Caco-2 (cell line): ENCODE measurements at regions of chr6 and their contacts with region 1.

Region 1: DNA sequence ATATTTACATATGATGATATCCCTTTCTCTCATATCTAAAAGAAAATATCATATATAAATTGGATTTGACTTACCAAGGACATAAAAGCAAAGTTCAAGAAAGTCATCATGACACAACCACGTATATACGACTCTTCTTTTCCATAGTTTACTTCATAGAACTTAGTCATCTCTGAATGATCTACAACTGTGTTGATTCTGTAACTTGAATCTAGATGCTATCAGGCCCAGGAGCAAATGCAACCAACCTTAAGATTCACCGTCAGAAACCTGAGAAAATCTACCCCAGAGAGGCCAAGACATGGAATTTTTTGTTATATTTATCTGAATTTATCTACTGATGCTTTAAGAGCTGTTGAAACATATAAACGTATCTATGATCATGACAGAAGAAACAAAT is 165.6 kb downstream of the PDE10A start:
- DNase-seq: no peak
- H3K4me3 ChIP-seq: no peak overlapping the region
- H3K4me3 Mint-ChIP-seq: no peak overlapping the region
- H3K27ac Mint-ChIP-seq: no peak overlapping the region
- H3K4me1 ChIP-seq: peaks cover 31% of the 10 kb centered on the region
- H3K4me1 Mint-ChIP-seq: peaks cover 23% of the 10 kb centered on the region
- H3K27me3 ChIP-seq: no peaks in the 10 kb centered on the region
- H3K27me3 Mint-ChIP-seq: no peaks in the 10 kb centered on the region
- CTCF ChIP-seq: no peak

Region 2: GRCh38 chr6:165486183-165487137 is 11.0 kb before region 1 on chr6:
- CTCF ChIA-PET with region 1: no interaction called
- POLR2A ChIA-PET with region 1: no interaction called
- intact Hi-C with region 1: loop called (anchors 2 kb)
- DNase-seq: no peak
- H3K4me3 ChIP-seq: no peak overlapping the region
- H3K4me3 Mint-ChIP-seq: no peak overlapping the region
- H3K27ac Mint-ChIP-seq: no peak overlapping the region
- H3K4me1 ChIP-seq: no peaks in the 10 kb centered on the region
- H3K4me1 Mint-ChIP-seq: no peaks in the 10 kb centered on the region
- H3K27me3 ChIP-seq: no peaks in the 10 kb centered on the region
- H3K27me3 Mint-ChIP-seq: no peaks in the 10 kb centered on the region
- CTCF ChIP-seq: no peak

Region 3: DNA sequence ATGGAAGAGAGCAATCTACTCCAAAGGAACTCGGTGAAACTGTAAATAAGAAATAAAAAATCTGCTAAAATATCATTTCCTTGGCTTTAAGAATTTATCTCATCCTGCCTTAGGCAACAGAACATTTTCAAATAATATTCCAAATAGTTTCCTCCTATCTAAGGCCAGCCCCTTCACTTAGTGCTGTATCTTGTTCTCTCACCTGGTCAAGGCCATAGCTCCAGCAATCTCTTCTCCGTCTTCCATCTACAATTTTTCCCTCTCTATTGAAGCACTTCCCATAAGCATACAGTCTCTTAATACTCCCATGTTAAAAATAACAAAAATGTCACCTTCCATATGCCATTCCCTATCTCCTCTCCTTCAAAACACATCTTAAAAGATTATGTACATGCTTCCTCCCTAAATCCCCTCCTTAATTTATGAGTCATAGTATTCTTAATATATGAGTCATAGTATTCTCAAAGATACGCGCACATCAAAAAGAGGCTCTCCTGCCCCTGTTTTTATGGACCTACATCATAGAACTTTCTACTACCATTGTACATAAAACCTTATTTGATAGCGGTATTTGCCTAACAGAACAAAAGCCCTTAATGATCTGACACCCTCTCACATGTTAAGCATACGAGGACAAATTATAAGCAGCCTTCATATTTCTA is 18.6 kb after region 1 on chr6:
- CTCF ChIA-PET with region 1: no interaction called
- POLR2A ChIA-PET with region 1: no interaction called
- intact Hi-C with region 1: loop called (anchors 2 kb)
- DNase-seq: no peak
- H3K4me3 ChIP-seq: no peak overlapping the region
- H3K4me3 Mint-ChIP-seq: no peak overlapping the region
- H3K27ac Mint-ChIP-seq: peak overlapping the region; percentile 20
- H3K4me1 ChIP-seq: peaks cover 9% of the 10 kb centered on the region; the same call in 1 of the 2 replicates
- H3K4me1 Mint-ChIP-seq: peaks cover 7% of the 10 kb centered on the region
- H3K27me3 ChIP-seq: no peaks in the 10 kb centered on the region
- H3K27me3 Mint-ChIP-seq: no peaks in the 10 kb centered on the region
- CTCF ChIP-seq: no peak

Region 4: GRCh38 chr6:165556116-165556843 is 58.8 kb after region 1 on chr6:
- CTCF ChIA-PET with region 1: no interaction called
- POLR2A ChIA-PET with region 1: no interaction called
- intact Hi-C with region 1: loop called (anchors 2 kb)
- DNase-seq: peak in 1 of 2 experiments; percentile 2
- H3K4me3 ChIP-seq: no peak overlapping the region
- H3K4me3 Mint-ChIP-seq: no peak overlapping the region
- H3K27ac Mint-ChIP-seq: no peak overlapping the region
- H3K4me1 ChIP-seq: peaks cover 5% of the 10 kb centered on the region; the same call in 1 of the 2 replicates
- H3K4me1 Mint-ChIP-seq: no peaks in the 10 kb centered on the region
- H3K27me3 ChIP-seq: no peaks in the 10 kb centered on the region
- H3K27me3 Mint-ChIP-seq: no peaks in the 10 kb centered on the region
- CTCF ChIP-seq: no peak

Region 5: DNA sequence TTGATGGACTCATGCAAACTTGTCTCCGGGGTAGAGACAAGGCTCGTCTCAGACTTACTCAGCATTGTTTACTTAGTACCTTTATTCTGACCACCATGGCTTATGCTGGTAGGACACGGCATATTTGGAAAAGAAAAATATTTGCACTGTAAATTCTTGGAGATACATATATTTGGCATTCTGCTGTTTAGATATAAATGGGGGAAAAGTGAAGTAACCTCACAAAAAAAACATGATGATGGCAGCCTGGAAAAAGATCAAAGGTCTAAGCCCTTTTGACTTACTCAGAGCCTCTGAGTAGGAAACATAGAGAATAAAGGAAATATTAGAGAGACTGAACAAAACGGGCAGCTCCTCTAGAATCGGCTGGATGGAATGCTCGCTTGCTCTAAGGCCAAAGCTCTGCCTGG is 133.1 kb after region 1 on chr6:
- CTCF ChIA-PET with region 1: no interaction called
- POLR2A ChIA-PET with region 1: no interaction called
- intact Hi-C with region 1: loop called (anchors 1 kb)
- DNase-seq: no peak
- H3K4me3 ChIP-seq: no peak overlapping the region
- H3K4me3 Mint-ChIP-seq: peak overlapping the region; percentile 42
- H3K27ac Mint-ChIP-seq: no peak overlapping the region
- H3K4me1 ChIP-seq: peaks cover 15% of the 10 kb centered on the region; the same call in 1 of the 2 replicates
- H3K4me1 Mint-ChIP-seq: peaks cover 8% of the 10 kb centered on the region
- H3K27me3 ChIP-seq: peaks cover 1% of the 10 kb centered on the region; the same call in 1 of the 2 replicates
- H3K27me3 Mint-ChIP-seq: no peaks in the 10 kb centered on the region
- CTCF ChIP-seq: no peak

Region 6: DNA sequence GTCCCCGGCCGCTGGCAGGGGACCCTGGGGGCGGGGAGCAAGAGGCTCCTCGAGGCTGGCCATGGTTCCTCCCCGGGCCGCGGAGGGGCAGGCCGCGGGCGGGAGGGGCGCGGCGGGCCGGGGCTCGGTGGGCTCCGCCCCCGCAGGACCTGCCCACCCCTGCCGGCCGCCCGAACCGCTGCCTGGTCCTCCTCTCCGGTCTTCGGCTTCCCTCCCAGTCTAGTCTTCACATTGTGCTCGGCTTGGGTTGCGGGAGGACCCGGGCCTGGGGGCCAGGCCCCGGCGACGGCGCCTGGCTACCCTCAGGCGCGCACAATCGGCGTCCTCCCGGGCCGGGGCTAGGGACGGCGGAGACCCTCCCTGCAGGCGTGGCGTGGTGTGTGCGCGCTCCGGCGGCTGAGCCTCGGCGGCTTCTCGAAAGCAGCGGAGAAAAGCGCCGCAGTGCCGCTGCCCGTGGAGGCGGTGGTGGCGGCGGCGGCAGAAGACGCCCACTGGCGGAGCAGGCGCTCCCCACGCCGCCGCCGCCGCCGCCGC is 165.3 kb after region 1 on chr6 and contains the start of gene PDE10A:
- CTCF ChIA-PET with region 1: no interaction called
- POLR2A ChIA-PET with region 1: no interaction called
- intact Hi-C with region 1: loop called (anchors 1 kb)
- DNase-seq: peak; percentile 53 to 58
- H3K4me3 ChIP-seq: peak within 1 kb of the TSS; percentile 47
- H3K4me3 Mint-ChIP-seq: peak within 1 kb of the TSS; percentile 73
- H3K27ac Mint-ChIP-seq: no peak within 1 kb of the TSS
- H3K4me1 ChIP-seq: peaks cover 11% of the 10 kb centered on the region; the same call in 1 of the 2 replicates
- H3K4me1 Mint-ChIP-seq: peaks cover 25% of the 10 kb centered on the region
- H3K27me3 ChIP-seq: 0 out of 2 replicates have a peak, but pooled peaks cover 2% of the 10 kb centered on the region
- H3K27me3 Mint-ChIP-seq: peaks cover 23% of the 10 kb centered on the region
- CTCF ChIP-seq: no peak
- total RNA-seq, gene PDE10A: 3.4 and 3.6 TPM in 2 replicates

Region 7: DNA sequence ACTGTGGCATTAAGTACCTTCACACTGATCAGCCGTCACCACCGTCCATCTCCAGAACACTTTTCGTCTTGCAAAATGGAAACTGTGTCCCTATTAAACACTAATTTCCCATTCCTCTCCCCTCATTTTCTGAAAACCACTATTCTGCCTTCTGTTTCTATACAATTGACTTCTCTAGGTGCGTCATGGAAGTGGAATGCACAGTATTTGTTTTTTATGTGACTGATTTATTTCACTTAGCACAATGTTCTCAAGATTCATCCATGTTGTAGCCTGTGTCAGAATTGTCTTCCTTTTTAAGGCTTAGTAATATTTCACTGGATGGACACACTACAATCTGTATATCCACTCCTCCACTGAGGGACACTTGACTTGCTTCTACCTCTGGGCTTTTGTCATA is 219.4 kb after region 1 on chr6:
- CTCF ChIA-PET with region 1: no interaction called
- POLR2A ChIA-PET with region 1: no interaction called
- intact Hi-C with region 1: loop called (anchors 1 kb)
- DNase-seq: no peak
- H3K4me3 ChIP-seq: no peak overlapping the region
- H3K4me3 Mint-ChIP-seq: no peak overlapping the region
- H3K27ac Mint-ChIP-seq: no peak overlapping the region
- H3K4me1 ChIP-seq: peaks cover 35% of the 10 kb centered on the region
- H3K4me1 Mint-ChIP-seq: peaks cover 33% of the 10 kb centered on the region
- H3K27me3 ChIP-seq: no peaks in the 10 kb centered on the region
- H3K27me3 Mint-ChIP-seq: no peaks in the 10 kb centered on the region
- CTCF ChIP-seq: no peak